ENCODE measurements at regions of chr2 and their contacts with region 1.

Region 1: GRCh38 chr2:222993920-222994650 is 57.9 kb upstream of the KCNE4 start:
- DNase-seq: no peak
- H3K27ac ChIP-seq: no peak overlapping the region
- CTCF ChIP-seq: no peak

Region 2: DNA sequence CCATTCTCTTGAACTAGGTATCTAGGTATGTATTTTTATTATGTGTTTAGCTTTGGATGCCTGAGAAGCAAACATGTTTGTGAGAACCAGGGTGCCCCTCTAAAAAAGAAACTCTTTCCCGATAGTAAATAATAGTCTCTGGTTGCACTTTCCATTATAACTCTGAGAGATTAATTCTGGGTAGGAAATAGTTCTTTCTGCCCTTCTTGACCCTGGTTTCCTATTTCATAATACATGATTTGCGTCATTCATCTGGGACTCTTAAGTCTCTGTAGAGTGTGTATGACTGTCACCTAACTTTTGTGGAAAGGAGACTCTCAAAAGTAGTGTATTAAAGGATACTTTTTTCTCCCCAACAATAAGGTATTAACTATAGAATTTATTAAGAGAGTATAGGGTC is 101.8 kb before region 1 on chr2:
- CTCF ChIA-PET with region 1: no interaction called
- POLR2A ChIA-PET with region 1: no interaction called
- DNase-seq: peak; percentile 25
- H3K27ac ChIP-seq: no peak overlapping the region
- CTCF ChIP-seq: no peak

Region 3: GRCh38 chr2:222903234-222904220 is 90.6 kb before region 1 on chr2:
- CTCF ChIA-PET with region 1: no interaction called
- POLR2A ChIA-PET with region 1: no interaction called
- DNase-seq: peak; percentile 42
- H3K27ac ChIP-seq: peak overlapping the region; percentile 65
- CTCF ChIP-seq: peak; percentile 64

Region 4: DNA sequence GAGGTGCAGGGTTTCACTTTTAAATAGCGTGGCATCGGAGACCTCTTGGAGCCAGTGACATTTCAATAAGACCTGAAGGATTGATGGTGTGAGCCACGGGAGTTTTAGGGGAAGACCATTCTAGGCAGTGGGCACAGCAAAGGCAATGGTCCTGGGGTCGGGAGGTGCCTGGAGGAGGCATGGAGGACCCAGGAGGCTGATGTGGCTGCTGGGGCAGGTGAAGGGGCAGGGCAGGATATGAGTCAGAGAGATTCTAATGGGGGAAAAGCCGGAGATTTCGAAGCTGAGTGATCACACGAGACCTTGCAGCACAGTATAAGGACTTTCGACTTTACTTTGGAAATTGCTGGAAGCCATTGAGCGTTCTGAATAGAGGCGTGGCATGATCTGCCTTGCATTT is 21.7 kb before region 1 on chr2:
- CTCF ChIA-PET with region 1: interaction called, 16 read pairs
- POLR2A ChIA-PET with region 1: no interaction called
- DNase-seq: no peak
- H3K27ac ChIP-seq: no peak overlapping the region
- CTCF ChIP-seq: no peak

Region 5: DNA sequence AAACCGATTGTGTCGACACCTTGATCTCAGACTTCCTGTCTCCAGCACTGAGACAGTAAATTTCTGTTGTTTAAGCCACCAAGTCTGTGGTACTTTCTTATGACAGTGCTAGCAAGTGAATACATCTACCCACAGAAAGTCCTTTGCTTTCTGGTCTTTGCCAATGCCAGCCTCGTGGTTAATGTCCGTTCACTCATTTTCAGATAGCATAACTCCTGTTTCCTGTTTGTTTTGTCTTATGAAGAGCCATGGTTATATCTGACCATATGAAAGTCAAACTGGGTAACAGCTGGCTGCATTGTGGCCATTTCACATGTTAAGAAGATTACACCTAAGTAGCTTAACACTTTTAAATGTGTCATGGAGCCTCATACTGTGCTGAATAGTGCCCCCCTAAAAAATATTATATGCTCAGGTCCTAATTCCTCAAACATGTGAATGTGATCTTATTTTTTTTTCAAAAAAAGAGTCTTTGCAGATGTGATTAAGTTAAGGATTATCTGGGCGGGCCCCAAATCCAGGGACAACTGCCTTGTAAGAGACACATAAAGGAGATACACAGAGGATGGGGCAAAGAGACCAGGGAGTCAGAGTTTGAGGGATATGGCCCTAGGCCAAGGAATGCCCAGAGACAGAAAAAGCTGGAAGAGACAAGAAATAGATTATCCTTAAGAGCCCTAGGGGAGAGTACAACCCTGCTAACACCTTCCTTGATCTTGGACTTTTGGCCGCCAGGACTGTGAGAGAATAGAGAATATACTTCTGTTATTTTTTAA is 175.9 kb after region 1 on chr2:
- CTCF ChIA-PET with region 1: no interaction called
- POLR2A ChIA-PET with region 1: no interaction called
- DNase-seq: no peak
- H3K27ac ChIP-seq: no peak overlapping the region
- CTCF ChIP-seq: no peak

Measured in RWPE1 (cell line).